GM13977 (cell line): ENCODE measurements at regions of chr9 and their contacts with region 1.

Region 1: GRCh38 chr9:100322954-100323536 is 29.7 kb downstream of the TEX10 start:
- DNase-seq: peak; percentile 9
- CTCF ChIP-seq: peak; percentile 62

Region 2: GRCh38 chr9:99162759-99163364 is 1160.2 kb before region 1 on chr9:
- in situ Hi-C with region 1: loop called (anchors 25 kb)
- DNase-seq: peak; percentile 52
- CTCF ChIP-seq: peak; percentile 60

Region 3: GRCh38 chr9:99977033-99977792 is 345.8 kb before region 1 on chr9:
- in situ Hi-C with region 1: no loop called
- DNase-seq: no peak
- CTCF ChIP-seq: no peak